ENCODE measurements at regions of chr17 and their contacts with region 1.

Region 1: GRCh38 chr17:62065598-62066468 is 755 bp upstream of the MED13 start:
- DNase-seq: peak; percentile 97
- H3K4me3 Mint-ChIP-seq: peak overlapping the region; percentile 94
- H3K27ac Mint-ChIP-seq: peak overlapping the region; percentile 98
- H3K4me1 Mint-ChIP-seq: peaks cover 36% of the 10 kb centered on the region
- H3K27me3 Mint-ChIP-seq: no peaks in the 10 kb centered on the region

Region 2: DNA sequence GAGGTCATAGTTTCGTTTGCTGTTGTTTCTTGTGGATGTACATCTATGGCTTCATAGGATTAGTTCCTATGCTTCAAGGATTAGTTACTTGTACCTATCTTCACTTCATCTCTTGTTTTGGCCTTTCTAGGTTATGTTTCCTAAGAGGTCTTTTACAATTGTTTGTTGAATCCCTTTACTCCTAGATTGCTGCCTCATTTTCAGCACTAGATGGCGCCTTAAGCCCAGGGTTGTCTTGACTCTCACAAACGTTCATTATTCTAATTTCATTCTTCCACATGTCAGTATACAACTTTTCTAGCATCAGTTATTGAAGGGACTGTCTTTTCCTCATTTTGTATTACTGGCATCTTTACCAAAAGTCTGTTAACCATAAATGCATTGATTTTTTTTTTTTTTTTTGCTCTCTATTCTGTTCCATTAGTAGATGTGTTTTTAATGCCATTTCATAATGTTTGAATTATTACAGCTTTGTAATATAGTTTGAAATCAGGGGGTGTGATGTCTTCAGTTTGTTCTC is 429.9 kb before region 1 on chr17:
- intact Hi-C with region 1: loop called (anchors 1 kb)
- DNase-seq: peak; percentile 35
- H3K4me3 Mint-ChIP-seq: no peak overlapping the region
- H3K27ac Mint-ChIP-seq: no peak overlapping the region
- H3K4me1 Mint-ChIP-seq: no peaks in the 10 kb centered on the region
- H3K27me3 Mint-ChIP-seq: peaks cover 56% of the 10 kb centered on the region

Region 3: DNA sequence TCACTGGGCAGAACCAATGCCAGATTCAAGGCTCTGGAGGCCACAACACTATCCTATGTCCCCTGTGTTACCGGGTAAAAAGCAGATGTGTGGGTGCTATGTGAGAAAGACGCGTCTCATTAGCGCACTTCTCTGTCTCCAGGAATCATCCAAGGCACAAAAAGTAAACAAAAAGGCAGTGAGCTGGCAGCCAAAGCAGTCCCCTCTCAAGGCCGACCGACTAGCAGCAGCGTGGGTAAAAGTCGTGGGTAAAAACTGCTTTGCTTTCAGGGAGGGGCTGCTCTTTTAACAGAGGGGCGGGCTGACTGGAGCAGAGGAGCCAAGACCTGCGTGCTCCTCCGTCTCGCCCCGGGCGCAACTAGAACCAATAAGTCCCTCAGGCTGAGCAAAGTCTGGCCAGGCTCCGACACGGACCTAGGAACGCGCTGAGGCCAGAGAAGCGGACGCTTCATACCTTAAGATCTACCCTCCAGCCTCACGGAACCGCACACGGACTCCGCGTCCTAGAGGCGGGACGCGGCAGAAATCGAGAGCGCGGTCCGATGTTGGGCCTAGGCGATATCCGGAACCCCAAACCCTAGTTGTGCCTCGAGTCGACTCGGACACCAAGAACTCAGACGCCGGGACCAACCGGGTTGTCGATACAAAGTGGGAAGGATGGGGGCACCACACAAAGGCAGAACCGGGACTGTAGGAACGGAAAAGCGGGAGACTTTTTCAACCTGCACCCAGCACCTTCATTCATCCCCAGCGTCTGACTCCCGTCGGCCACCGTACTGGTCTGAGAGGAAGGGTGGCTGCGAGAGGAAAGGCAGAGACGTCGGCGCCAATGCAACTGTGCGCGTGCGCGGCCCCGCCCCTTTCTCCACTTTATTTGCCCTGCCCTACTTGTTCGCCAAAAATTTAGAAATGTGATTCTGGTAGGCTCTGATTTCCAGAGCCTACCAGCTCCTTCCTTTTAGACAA is 138.3 kb before region 1 on chr17 and contains the start of gene INTS2:
- intact Hi-C with region 1: loop called (anchors 1 kb)
- DNase-seq: peak; percentile 90
- H3K4me3 Mint-ChIP-seq: peak within 1 kb of the TSS; percentile 92
- H3K27ac Mint-ChIP-seq: peak within 1 kb of the TSS; percentile 93
- H3K4me1 Mint-ChIP-seq: peaks cover 22% of the 10 kb centered on the region
- H3K27me3 Mint-ChIP-seq: no peaks in the 10 kb centered on the region
- total RNA-seq, gene INTS2: 25.4 and 25.6 TPM in 2 replicates

Region 4: DNA sequence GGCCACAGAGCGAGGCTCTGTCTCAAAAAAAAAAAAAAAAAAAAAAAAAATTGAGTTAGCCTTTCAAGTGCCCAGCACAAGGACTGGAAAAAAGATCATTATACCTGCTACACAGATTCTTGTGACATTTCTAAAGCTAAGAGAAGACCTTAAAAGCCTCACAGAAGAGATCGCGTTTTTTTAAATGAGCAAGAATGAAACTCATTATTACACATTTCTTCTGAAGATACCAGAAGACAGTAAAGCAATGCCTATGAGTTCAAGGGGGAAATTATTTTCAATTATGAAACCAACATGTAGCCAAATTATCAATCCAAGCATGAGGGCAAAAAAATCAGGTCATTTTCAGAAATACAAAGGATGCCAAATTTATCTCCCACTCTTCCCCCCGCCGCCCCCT is 57.5 kb before region 1 on chr17:
- intact Hi-C with region 1: loop called (anchors 2 kb)
- DNase-seq: no peak
- H3K4me3 Mint-ChIP-seq: no peak overlapping the region
- H3K27ac Mint-ChIP-seq: no peak overlapping the region
- H3K4me1 Mint-ChIP-seq: peaks cover 16% of the 10 kb centered on the region
- H3K27me3 Mint-ChIP-seq: no peaks in the 10 kb centered on the region

Region 5: GRCh38 chr17:63741221-63742049 is 1675.6 kb after region 1 on chr17 and contains the start of gene STRADA:
- intact Hi-C with region 1: loop called (anchors 10 kb)
- DNase-seq: peak; percentile 99
- H3K4me3 Mint-ChIP-seq: peak within 1 kb of the TSS; percentile 98
- H3K27ac Mint-ChIP-seq: peak within 1 kb of the TSS; percentile 97
- H3K4me1 Mint-ChIP-seq: peaks cover 25% of the 10 kb centered on the region
- H3K27me3 Mint-ChIP-seq: no peaks in the 10 kb centered on the region
- total RNA-seq, gene STRADA: 59.1 and 59.4 TPM in 2 replicates